ENCODE measurements at regions of chr10 and their contacts with region 1.

Region 1: DNA sequence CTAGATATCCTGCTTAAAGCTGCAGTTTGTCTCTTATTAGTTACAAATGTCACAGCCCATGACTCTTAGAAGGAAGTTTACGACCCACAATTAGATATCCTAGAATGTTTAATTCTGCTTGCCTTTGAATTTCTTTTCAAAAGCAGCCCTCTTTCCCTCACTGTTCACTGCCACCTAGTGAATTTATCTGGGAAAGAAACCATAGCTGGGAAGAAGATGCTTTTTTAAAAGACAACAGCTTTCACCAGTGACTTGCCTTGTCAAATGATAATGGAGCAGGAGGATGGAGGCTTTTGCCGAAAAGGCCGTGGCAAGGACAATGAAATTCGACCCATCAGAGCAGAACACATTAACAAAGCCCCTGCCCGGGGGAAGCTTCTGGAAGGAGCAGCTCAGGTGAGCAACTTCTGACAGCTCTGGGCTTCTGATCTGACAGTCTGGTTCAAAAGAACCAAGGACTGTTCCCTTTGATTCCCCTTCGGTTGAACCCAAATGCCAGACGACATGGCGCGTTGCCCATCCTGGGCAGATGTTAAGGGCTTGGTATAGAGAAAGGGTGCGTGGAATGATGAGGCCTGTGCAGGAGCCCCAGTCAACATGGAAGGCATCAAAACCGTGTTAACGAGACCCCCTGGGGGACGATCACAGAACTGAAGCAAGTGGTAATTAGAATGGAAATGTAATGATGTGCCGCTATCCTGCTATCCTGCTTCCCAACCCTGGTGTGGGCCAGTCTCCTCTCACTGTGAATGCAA is 236.8 kb downstream of the FRMD4A start:
- DNase-seq: no peak
- ATAC-seq: peak; percentile 40

Region 2: DNA sequence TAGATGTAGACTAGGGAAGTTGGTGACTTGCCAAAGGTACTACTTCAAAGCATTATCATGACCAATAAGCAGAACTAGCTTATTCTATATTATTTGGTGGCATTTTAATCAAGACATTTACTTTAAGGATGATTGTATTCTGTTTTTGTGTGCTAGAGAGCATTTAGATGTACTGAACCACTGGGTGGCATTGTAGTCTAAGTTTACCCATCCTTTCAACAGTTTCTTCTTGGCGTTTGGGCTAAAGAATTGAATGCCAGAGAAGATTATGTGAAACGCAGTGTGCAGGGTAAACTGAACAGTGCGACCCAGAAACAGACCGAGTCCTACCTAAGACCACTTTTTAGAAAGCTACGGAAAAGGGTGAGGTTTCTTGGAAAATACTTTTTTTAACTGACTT is 480.4 kb before region 1 on chr10:
- intact Hi-C with region 1: loop called (anchors 5 kb)
- DNase-seq: no peak
- ATAC-seq: peak; percentile 83

Region 3: DNA sequence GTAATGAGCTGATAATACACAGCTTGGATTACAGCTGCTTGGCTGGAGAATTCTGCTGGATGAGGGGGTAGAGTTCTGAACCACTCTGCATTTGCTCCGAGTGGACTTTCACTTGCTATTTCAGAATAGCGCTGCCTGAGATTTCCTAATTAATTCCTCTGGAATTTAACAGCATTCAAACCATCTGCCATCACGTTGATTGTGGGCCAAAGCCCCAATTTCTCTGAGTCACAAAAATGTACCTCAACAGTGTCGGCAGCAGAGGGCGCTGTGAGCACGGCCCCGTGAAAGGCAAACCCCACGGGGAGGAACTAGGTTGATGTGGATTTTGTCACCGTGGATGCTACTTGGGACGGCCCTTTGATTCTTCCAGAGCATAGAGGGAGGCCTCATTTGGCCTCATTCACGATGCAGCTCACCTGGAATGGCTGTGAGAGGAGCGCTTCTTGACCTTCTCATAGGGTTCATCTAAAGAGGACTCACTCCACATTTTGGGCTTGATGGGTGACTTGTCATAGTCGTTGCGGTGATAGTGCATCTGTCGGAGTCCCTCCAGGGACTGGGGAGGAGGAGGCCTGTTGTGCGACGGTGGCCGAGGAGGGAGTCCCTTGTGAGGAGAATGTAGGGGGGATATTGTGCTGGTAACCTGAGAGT is 433.9 kb before region 1 on chr10:
- intact Hi-C with region 1: loop called (anchors 5 kb)
- DNase-seq: peak; percentile 80
- ATAC-seq: peak; percentile 83

Region 4: GRCh38 chr10:13724484-13724883 is 369.4 kb before region 1 on chr10:
- intact Hi-C with region 1: no loop called
- DNase-seq: no peak
- ATAC-seq: peak; percentile 80

Region 5: GRCh38 chr10:13990946-13991345 is 103.0 kb before region 1 on chr10:
- intact Hi-C with region 1: loop called (anchors 10 kb)
- DNase-seq: peak; percentile 78
- ATAC-seq: peak; percentile 20

Measured in Right ventricle myocardium inferior (tissue), 1 donor.